ENCODE measurements at regions of chr20 and their contacts with region 1.

Region 1: GRCh38 chr20:41339507-41340326 is 904 bp upstream of the LPIN3 start:
- DNase-seq: peak; percentile 92
- ATAC-seq: peak; percentile 76
- H3K4me3 Mint-ChIP-seq: peak overlapping the region; percentile 68
- H3K27ac Mint-ChIP-seq: peak overlapping the region; percentile 27
- H3K4me1 Mint-ChIP-seq: peaks cover 7% of the 10 kb centered on the region
- H3K27me3 Mint-ChIP-seq: peaks cover 2% of the 10 kb centered on the region

Region 2: DNA sequence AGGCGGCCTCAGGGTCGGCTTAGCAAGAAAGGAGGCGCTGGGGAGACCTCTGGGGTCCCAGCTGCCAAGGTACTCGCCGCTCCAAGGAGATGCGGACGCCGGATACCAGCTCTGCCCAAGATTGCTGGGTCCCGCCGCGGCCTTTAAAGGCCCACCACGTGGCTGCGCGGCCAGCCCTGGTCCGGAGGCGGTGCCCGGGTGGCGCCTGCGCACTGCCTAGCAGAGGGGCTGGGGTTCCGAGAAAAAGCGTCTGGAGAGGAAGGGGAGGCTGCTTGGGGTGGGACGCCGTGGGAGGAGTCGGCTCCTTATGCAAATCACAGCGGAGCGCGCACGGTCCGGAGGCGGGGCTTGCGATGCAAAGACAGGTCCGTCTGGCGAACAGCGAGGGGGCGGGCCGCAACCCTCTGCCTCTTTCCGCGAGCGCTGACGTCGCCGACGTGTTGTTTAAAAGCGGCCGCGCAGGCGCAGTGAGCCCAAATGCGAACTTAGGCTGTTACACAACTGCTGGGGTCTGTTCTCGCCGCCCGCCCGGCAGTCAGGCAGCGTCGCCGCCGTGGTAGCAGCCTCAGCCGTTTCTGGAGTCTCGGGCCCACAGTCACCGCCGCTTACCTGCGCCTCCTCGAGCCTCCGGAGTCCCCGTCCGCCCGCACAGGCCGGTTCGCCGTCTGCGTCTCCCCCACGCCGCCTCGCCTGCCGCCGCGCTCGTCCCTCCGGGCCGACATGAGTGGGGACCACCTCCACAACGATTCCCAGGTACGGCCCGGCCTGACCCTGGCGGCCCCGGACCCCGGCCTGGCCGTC is 311.2 kb before region 1 on chr20 and contains the start of gene TOP1:
- CTCF ChIA-PET with region 1: interaction called, 3 read pairs
- POLR2A ChIA-PET with region 1: no interaction called
- intact Hi-C with region 1: loop called in 1 of 2 experiments (anchors 1 kb)
- DNase-seq: peak; percentile 100
- ATAC-seq: peak; percentile 98
- H3K4me3 Mint-ChIP-seq: peak within 1 kb of the TSS; percentile 84
- H3K27ac Mint-ChIP-seq: peak within 1 kb of the TSS; percentile 92
- H3K4me1 Mint-ChIP-seq: peaks cover 45% of the 10 kb centered on the region
- H3K27me3 Mint-ChIP-seq: no peaks in the 10 kb centered on the region
- total RNA-seq, gene TOP1: 111 to 124 TPM

Region 3: GRCh38 chr20:41173161-41173721 is 166.5 kb before region 1 on chr20:
- CTCF ChIA-PET with region 1: interaction called, 21 read pairs
- POLR2A ChIA-PET with region 1: no interaction called
- intact Hi-C with region 1: loop called (anchors 1 kb)
- DNase-seq: peak; percentile 78
- ATAC-seq: peak; percentile 78
- H3K4me3 Mint-ChIP-seq: no peak overlapping the region
- H3K27ac Mint-ChIP-seq: peak overlapping the region; percentile 65
- H3K4me1 Mint-ChIP-seq: peaks cover 6% of the 10 kb centered on the region
- H3K27me3 Mint-ChIP-seq: no peaks in the 10 kb centered on the region

Region 4: GRCh38 chr20:41317536-41318270 is 22.0 kb before region 1 on chr20 and contains the start of gene ZHX3:
- CTCF ChIA-PET with region 1: interaction called, 5 read pairs
- POLR2A ChIA-PET with region 1: interaction called, 5 read pairs
- intact Hi-C with region 1: loop called (anchors 1 kb)
- DNase-seq: peak; percentile 98
- ATAC-seq: peak; percentile 99
- H3K4me3 Mint-ChIP-seq: peak within 1 kb of the TSS; percentile 84
- H3K27ac Mint-ChIP-seq: peak within 1 kb of the TSS; percentile 66
- H3K4me1 Mint-ChIP-seq: peaks cover 31% of the 10 kb centered on the region
- H3K27me3 Mint-ChIP-seq: no peaks in the 10 kb centered on the region
- total RNA-seq, gene ZHX3: 12.8 to 15.4 TPM

Region 5: GRCh38 chr20:41380551-41381193 is 41.0 kb after region 1 on chr20:
- CTCF ChIA-PET with region 1: no interaction called
- POLR2A ChIA-PET with region 1: no interaction called
- intact Hi-C with region 1: no loop called
- DNase-seq: no peak
- ATAC-seq: no peak
- H3K4me3 Mint-ChIP-seq: no peak overlapping the region
- H3K27ac Mint-ChIP-seq: no peak overlapping the region
- H3K4me1 Mint-ChIP-seq: peaks cover 8% of the 10 kb centered on the region
- H3K27me3 Mint-ChIP-seq: peaks cover 9% of the 10 kb centered on the region

Region 6: GRCh38 chr20:41617931-41618806 is 278.5 kb after region 1 on chr20 and contains the start of gene CHD6:
- CTCF ChIA-PET with region 1: no interaction called
- POLR2A ChIA-PET with region 1: no interaction called
- intact Hi-C with region 1: loop called in 1 of 2 experiments (anchors 2 kb)
- DNase-seq: peak; percentile 99
- ATAC-seq: peak; percentile 99
- H3K4me3 Mint-ChIP-seq: peak within 1 kb of the TSS; percentile 75
- H3K27ac Mint-ChIP-seq: peak within 1 kb of the TSS; percentile 75
- H3K4me1 Mint-ChIP-seq: peaks cover 42% of the 10 kb centered on the region
- H3K27me3 Mint-ChIP-seq: no peaks in the 10 kb centered on the region
- total RNA-seq, gene CHD6: 30.2 to 34.0 TPM

Measured in activated CD4-positive, alpha-beta T cell treated with anti-CD3 and anti-CD28 coated beads for 36 hours (primary cell).